AG04449 (cell line): ENCODE measurements at regions of chr15 and their contacts with region 1.

Region 1: DNA sequence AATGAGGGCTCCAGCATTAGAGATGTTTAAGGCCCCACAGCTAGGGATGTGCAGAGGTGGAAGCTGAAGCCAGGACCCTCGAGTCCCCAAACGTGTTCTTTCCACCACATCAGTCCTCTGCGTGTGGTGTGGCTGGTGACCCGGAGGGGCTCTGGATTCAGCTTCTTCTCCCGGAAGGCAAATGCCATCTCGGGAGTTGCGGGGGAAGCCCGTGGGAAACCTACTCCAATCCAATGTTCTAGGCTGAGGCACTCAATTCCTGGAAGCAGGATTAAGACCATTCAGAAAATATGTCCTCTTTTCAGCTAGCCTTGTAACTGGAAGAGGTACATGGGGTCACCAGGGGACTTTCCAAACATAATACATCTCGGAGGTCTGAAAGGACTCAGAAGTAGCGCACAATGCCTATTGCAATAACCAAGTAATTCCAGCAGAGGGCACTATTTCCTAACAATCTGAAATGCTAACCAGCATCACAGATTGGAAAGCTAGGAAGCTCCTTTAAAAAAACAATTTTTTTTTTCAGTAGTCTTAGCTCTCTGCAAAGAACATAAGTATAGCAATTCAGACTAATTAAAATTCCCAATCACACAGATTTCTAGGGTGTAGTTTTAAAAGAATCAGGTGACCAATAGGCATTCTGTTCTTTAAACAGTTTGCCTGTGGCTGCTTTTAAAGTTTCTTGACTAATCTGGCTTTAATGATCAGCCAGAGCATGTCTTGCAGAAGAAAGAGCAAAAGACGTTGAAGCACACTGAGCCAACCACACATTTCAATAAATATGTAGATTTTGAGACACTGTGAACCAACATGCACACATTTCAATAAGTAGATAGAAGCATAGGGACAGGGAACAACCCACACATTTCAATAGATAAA is 36.1 kb downstream of the BNC1 start:
- DNase-seq: peak; percentile 5
- H3K4me3 ChIP-seq: no peak overlapping the region
- CTCF ChIP-seq: peak; percentile 62

Region 2: GRCh38 chr15:83011271-83012075 is 236.9 kb before region 1 on chr15 and contains the start of gene C15orf40:
- CTCF ChIA-PET with region 1: interaction called, 11 read pairs
- POLR2A ChIA-PET with region 1: no interaction called
- DNase-seq: peak; percentile 24
- H3K4me3 ChIP-seq: peak within 1 kb of the TSS; percentile 90
- CTCF ChIP-seq: peak; percentile 90

Region 3: DNA sequence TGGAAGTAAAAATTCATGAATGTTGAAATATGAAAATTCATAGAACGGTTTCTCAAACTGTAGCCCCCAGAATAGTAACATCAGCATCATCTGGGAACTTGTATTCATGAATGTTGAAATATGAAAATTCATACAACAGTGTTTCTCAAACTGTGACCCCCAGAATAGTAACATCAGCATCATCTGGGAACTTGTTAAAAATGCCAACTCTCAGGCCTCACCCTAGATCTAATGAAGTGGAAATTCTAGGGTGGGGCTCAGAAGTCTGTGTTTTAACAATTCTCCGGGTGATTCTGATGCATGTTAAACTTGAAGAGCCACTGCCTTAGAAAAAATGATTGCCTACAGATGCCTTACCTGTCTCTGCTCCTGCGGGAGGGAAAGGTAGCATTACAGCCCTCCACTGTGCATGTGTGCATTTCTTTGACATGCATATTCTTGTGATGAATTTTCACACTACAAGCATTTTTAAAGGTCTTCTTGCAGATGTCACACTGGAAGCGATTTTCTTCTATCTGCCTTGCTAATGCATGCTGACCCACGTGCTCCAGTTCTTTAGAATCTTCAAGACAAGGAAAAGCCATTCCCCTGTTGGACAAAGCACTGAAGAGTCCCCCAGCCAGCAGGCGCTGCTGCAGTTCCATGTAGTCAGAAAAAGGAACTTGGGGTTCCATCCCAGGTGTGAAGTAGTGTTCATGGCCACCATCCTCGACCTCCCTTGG is 14.4 kb after region 1 on chr15:
- CTCF ChIA-PET with region 1: interaction called, 24 read pairs
- POLR2A ChIA-PET with region 1: no interaction called
- DNase-seq: no peak
- H3K4me3 ChIP-seq: no peak overlapping the region
- CTCF ChIP-seq: no peak

Region 4: GRCh38 chr15:83323296-83323711 is 74.9 kb after region 1 on chr15:
- CTCF ChIA-PET with region 1: no interaction called
- POLR2A ChIA-PET with region 1: no interaction called
- DNase-seq: peak; percentile 83
- H3K4me3 ChIP-seq: no peak overlapping the region
- CTCF ChIP-seq: no peak

Region 5: DNA sequence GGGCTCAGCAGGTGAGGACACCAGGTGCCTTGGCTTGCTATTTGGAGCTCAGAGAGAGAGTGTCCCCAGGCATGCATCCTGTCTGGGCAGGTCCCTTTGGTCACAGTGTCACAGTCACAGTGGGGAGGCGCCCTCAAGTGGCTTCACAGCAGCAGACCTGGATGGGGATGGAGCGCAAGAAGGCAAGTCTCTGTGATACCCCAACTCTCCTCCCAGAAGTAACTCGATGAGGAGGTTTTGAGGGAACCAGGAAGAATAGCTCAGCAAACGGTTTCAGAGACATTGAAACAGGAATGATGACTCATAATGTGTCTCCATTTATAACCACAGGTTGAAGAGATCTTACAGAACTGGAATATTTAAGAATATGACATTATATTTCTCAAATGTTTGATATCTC is 132.3 kb after region 1 on chr15:
- CTCF ChIA-PET with region 1: interaction called, 92 read pairs
- POLR2A ChIA-PET with region 1: no interaction called
- DNase-seq: no peak
- H3K4me3 ChIP-seq: no peak overlapping the region
- CTCF ChIP-seq: peak; percentile 56

Region 6: DNA sequence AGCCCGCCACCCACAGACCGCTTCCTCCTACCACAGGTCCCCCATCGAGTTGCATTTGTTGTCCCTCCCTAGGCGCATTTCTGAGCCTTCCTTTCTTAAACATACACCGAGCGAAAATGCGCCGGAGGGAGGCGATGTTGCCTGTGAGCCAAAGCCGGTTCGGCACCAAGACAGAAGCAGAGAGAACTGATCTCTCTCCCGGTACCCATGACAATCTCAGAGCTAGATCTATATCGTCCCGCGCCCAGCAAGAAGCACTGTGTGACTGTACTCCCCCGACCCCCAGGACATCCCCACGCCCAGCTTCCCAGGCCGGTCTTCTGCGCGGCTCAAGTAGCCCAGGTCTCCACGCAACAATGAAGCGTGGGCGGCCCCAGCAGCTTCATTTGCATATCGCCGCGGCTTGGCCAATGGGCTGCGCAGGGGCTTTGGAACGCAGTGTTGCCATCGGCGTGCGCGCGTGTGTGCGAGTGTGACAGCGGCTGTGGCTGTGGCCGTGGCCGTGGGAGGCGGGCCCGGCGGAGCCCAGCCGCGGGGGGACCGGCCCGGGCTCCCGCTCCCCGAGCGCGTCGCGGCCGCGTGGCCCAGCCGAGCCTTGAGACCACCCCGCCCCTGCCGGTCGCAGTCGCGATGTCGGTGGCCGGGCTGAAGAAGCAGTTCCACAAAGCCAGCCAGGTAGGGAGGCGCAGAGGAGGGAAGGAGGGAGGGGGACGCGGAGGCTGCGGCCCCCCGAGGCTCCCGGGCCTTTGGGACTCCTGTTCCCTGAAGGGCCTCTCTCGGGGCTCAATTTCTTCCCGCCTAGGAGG is 198.7 kb after region 1 on chr15 and contains the start of gene SH3GL3:
- CTCF ChIA-PET with region 1: interaction called, 11 read pairs
- POLR2A ChIA-PET with region 1: no interaction called
- DNase-seq: no peak
- H3K4me3 ChIP-seq: peak within 1 kb of the TSS; percentile 55
- CTCF ChIP-seq: peak; percentile 16

Region 7: DNA sequence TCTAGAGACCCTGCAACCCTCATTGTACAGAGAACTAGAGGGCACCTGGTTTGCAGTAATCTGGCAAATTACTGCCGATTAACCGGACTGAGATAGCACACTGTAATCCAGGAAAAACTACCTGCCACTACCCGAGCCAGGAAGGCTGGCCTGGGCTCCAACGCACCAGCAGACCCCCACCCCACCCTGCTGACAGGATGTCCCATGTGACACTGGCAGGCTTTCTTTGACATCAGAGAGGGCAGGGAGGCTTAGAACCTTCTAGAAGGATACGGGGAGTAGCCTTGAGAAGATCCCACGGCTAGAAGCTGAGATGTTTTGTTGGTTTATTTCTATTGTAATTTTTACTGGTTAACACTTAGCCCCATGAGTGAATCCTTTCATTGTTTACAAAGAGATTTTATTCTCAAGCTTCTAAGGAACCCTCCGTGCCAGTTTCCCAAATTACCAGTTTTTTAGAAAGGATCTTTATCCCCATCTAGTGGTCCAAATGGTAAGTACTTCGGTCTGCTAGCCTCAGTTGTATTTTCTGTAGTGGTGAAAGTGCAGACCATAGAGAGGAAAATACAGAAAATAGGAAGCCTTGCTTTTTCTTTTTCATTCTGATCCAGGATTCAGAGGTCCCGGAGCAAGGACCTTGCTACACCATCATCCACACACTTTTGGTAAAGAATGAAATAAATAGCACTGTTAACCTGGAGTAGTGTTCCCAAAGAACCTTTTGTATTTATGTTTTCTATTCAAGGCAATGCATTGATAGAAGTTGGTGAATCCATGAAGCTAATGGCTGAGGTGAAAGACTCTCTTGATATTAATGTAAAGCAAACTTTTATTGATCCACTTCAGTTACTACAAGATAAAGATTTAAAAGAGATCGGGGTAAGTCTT is 323.7 kb after region 1 on chr15:
- CTCF ChIA-PET with region 1: interaction called, 44 read pairs
- POLR2A ChIA-PET with region 1: no interaction called
- DNase-seq: no peak
- H3K4me3 ChIP-seq: no peak overlapping the region
- CTCF ChIP-seq: peak; percentile 37